H1 (cell line): ENCODE measurements at regions of chr19 and their contacts with region 1.

Region 1: DNA sequence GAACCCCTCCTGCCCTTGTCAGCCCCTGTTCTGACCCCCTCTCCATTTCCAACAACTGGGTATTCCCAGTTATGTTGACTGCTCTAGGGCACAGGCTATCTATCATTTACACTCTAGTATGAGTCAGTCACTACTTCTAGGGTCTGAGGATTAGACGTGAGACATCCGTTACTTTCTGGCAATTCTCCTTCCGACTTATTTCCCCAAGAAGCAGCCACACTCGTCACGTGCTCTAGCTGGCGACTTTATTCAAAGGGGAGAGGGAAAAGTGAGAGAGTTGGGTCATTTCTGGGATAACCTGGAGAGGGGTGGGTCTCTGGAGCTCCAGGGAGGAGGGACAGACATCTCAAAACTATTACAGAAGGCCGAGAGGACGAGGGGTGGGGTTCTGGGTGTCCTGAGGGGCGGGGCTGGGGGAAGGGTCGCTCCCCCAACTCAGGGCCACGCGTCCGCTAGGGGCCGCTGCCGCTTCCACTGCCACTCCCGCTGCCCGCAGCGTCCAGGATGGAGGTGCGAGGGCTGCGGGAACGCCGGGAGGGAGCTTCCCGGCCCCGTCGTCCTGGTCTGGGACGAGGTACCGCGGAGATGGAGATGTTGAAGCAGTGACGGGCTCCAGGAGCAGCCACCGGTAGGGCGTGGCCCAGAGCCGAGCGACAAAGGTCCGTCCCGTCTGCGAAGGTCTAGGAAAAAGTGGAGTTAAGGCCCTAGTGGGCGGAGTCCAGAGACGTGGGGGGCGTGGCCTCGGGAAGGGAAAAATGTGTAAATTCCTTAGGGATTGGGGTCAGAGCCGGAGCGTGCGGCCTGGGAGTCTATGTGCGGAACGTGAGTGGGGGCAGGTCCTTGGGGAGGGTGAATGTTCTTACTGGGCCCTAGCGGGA is 8.9 kb downstream of the RTBDN start:
- DNase-seq: peak in 1 of 2 experiments; percentile 98
- H3K4me3 ChIP-seq: peak overlapping the region; percentile 42 to 64 (median 55)
- H3K27ac ChIP-seq: peak overlapping the region; percentile 26; the same call in 1 of the 2 replicates
- H3K4me1 ChIP-seq: peaks cover 0 to 8% (median 4%) of the 10 kb centered on the region in 4 experiments; a peak in 4 of 7 replicates
- H3K27me3 ChIP-seq: no peaks in the 10 kb centered on the region
- CTCF ChIP-seq: peak; percentile 76 to 81 (median 77)
- EP300 ChIP-seq: no peak
- POLR2A ChIP-seq: peak in 1 of 2 experiments; percentile 65; a peak in 1 of 3 replicates
- RAD21 ChIP-seq: peak; percentile 25 to 46; a peak in 2 of 4 replicates

Region 2: DNA sequence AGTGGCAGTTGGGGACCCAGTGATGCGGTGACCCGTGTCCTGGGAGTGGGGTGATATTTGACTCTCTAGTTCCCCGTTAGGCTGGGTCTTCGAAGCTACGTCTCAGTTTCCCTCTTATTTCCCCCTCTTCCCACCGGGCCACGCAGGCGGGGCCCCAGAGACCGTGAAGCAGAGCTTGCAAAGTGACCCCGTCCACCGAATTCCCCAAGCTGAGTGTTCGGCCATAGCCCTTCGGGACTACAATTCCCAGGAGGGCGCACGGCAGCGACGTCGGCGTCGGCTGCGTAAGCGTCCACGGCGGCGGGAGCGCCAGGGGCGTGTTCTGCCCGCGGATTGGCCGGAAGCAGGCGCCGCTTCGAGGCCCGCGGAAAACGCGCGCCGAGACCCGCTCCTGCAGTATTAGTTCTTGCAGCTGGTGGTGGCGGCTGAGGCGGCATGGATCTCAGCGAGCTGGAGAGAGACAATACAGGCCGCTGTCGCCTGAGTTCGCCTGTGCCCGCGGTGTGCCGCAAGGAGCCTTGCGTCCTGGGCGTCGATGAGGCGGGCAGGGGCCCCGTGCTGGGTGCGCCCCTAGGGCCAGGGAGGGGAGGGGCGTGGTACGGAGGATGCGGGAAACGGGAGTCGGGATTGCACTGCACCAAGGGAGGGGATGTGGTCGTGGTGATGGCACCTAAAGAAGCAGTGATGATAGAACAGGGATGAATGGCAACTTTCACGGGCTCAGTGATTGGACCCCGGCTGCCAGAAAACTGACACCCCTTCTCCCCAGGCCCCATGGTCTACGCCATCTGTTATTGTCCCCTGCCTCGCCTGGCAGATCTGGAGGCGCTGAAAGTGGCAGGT is 19.0 kb before region 1 on chr19 and contains the start of gene RNASEH2A:
- CTCF ChIA-PET with region 1: interaction called, 7 read pairs
- POLR2A ChIA-PET with region 1: interaction called, 11 read pairs
- DNase-seq: peak in 1 of 2 experiments; percentile 91
- H3K4me3 ChIP-seq: peak within 1 kb of the TSS; percentile 78 to 87 (median 80)
- H3K27ac ChIP-seq: peak within 1 kb of the TSS; percentile 33; the same call in 1 of the 2 replicates
- H3K4me1 ChIP-seq: peaks cover 0 to 14% (median 9%) of the 10 kb centered on the region in 4 experiments; a peak in 6 of 7 replicates
- H3K27me3 ChIP-seq: peaks cover 0 to 4% (median under 1%) of the 10 kb centered on the region in 4 experiments; a peak in 2 of 7 replicates
- CTCF ChIP-seq: no peak
- EP300 ChIP-seq: no peak
- POLR2A ChIP-seq: peak in 1 of 2 experiments; percentile 83; a peak in 1 of 3 replicates
- RAD21 ChIP-seq: no peak
- total RNA-seq, gene RNASEH2A: 67.5 and 67.9 TPM in 2 replicates

Region 3: DNA sequence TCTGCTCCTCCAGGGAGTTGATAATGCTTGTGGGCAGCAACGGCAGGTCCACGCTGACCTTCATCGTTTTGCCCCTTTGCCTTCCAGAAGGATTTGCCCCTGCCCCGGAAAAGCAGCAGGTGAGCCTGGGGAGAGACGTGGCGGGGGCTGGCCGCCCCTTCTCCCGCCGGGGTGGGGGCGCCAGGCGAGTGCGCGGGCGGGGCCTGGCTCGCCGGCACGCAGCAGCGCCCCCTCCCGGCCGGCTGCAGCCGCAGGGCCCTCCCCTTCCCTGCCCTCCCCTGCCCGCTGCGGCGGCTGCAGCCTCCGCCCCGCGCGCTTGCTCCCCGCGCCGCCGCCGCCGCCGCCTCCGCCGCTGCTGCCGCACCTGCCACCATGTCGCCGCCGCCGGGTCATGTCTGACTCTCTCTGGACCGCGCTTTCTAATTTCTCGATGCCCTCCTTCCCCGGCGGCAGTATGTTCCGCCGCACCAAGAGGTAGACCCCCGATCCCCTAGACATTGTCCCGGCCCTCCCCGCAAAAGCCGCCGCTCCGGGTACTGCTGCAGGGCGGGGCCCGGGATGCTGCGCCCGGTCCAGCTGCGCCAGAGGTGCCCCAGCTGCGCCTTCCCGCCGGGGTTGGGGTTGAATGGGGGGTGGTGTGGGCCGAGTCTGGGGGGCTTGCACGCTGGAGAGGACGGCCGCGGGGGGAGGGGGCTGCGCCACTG is 12.8 kb after region 1 on chr19 and contains the start of gene MAST1:
- CTCF ChIA-PET with region 1: interaction called, 18 read pairs
- POLR2A ChIA-PET with region 1: interaction called, 13 read pairs
- DNase-seq: peak in 1 of 2 experiments; percentile 86
- H3K4me3 ChIP-seq: peak within 1 kb of the TSS; percentile 59 to 92 (median 62)
- H3K27ac ChIP-seq: no peak within 1 kb of the TSS
- H3K4me1 ChIP-seq: peaks cover 8 to 43% (median 19%) of the 10 kb centered on the region in 4 experiments
- H3K27me3 ChIP-seq: peaks cover 0 to 13% (median 9%) of the 10 kb centered on the region in 4 experiments; a peak in 5 of 7 replicates
- CTCF ChIP-seq: peak; percentile 63 to 89 (median 69)
- EP300 ChIP-seq: no peak
- POLR2A ChIP-seq: no peak
- RAD21 ChIP-seq: no peak; a peak in 1 of 4 replicates
- total RNA-seq, gene MAST1: 25.2 and 28.3 TPM in 2 replicates

Region 4: GRCh38 chr19:12938234-12939025 is 112.9 kb after region 1 on chr19 and contains the start of gene CALR:
- CTCF ChIA-PET with region 1: no interaction called
- POLR2A ChIA-PET with region 1: no interaction called
- DNase-seq: peak; percentile 91 to 98
- H3K4me3 ChIP-seq: peak within 1 kb of the TSS; percentile 68 to 97 (median 93)
- H3K27ac ChIP-seq: peak within 1 kb of the TSS; percentile 32; the same call in 1 of the 2 replicates
- H3K4me1 ChIP-seq: peaks cover 0 to 23% (median 13%) of the 10 kb centered on the region in 4 experiments; a peak in 6 of 7 replicates
- H3K27me3 ChIP-seq: no peaks in the 10 kb centered on the region
- CTCF ChIP-seq: no peak
- EP300 ChIP-seq: no peak
- POLR2A ChIP-seq: peak; percentile 98 to 99
- RAD21 ChIP-seq: no peak
- total RNA-seq, gene CALR: 1,155 and 1,177 TPM in 2 replicates